CD4-positive, alpha-beta memory T cell (primary cell): ENCODE measurements at regions of chr6 and their contacts with region 1.

Region 1: GRCh38 chr6:27188885-27189418 is 58.5 kb upstream of the PRSS16 start:
- DNase-seq: peak; percentile 55 to 69 (median 67)
- H3K4me3 ChIP-seq: peak overlapping the region; percentile 58 to 73
- H3K4me3 Mint-ChIP-seq: peak overlapping the region; percentile 79 to 96 (median 93)
- H3K27ac ChIP-seq: peak overlapping the region; percentile 44
- H3K27ac Mint-ChIP-seq: peak overlapping the region; percentile 49 to 86 (median 73)
- H3K4me1 ChIP-seq: peaks cover 9% of the 10 kb centered on the region
- H3K4me1 Mint-ChIP-seq: peaks cover 2 to 20% (median 15%) of the 10 kb centered on the region in 4 donors
- H3K27me3 ChIP-seq: no peaks in the 10 kb centered on the region
- H3K27me3 Mint-ChIP-seq: no peaks in the 10 kb centered on the region

Region 2: DNA sequence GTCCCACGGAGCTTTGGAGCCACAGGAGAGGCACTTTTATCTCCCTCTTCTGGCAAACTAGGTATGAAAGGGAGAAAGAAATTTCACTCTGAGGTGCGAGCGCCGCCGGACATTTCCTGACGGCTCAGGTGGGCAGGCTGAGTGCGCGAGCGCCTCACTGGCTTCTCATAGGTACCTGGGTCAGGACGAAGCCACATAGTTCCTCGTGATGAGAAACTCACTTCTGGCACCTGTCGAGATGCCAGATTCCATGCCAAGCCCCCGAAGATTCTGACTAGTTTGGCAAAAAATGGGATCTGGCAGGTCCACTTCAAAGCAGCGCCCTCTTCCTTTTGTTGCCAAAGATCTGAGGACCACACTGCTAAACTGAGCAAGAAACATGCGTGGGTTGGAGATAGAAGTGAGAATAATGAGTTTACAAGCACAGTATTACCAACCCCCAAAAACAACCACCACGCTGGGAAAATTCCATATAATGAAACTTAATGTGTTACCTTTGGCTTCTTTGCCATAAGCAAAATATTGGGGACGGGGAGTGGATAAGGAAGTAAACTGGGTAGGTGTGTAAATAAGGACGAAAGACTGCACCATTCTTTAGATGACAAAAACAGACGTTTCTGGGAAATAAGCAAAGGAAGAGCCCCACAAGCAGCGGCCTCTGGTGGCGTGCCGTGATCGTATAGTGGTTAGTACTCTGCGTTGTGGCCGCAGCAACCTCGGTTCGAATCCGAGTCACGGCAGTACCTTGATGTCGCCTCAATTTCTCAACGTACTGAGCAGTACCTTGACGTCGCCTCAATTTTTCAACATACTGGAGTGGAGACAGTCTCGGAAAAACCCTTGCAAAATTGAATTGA is 31.3 kb before region 1 on chr6:
- CTCF ChIA-PET with region 1: interaction called, 3 read pairs
- POLR2A ChIA-PET with region 1: no interaction called
- intact Hi-C with region 1: loop called (anchors 1 kb)
- DNase-seq: peak; percentile 78 to 92 (median 82)
- H3K4me3 ChIP-seq: peak overlapping the region; percentile 18 to 44
- H3K4me3 Mint-ChIP-seq: peak overlapping the region; percentile 81 to 91 (median 84)
- H3K27ac ChIP-seq: no peak overlapping the region
- H3K27ac Mint-ChIP-seq: peak overlapping the region; percentile 68 to 95 (median 85)
- H3K4me1 ChIP-seq: peaks cover 30% of the 10 kb centered on the region
- H3K4me1 Mint-ChIP-seq: peaks cover 21 to 46% (median 38%) of the 10 kb centered on the region in 4 donors
- H3K27me3 ChIP-seq: no peaks in the 10 kb centered on the region
- H3K27me3 Mint-ChIP-seq: peaks cover 0 to 4% of the 10 kb centered on the region in 2 donors

Region 3: GRCh38 chr6:27608916-27609883 is 420.2 kb after region 1 on chr6:
- CTCF ChIA-PET with region 1: no interaction called
- POLR2A ChIA-PET with region 1: no interaction called
- intact Hi-C with region 1: loop called (anchors 2 kb)
- DNase-seq: peak in 1 of 5 donors; percentile 25
- H3K4me3 ChIP-seq: no peak overlapping the region
- H3K4me3 Mint-ChIP-seq: no peak overlapping the region
- H3K27ac ChIP-seq: no peak overlapping the region
- H3K27ac Mint-ChIP-seq: no peak overlapping the region
- H3K4me1 ChIP-seq: peaks cover 8% of the 10 kb centered on the region
- H3K4me1 Mint-ChIP-seq: peaks cover 7 to 16% (median 11%) of the 10 kb centered on the region in 4 donors
- H3K27me3 ChIP-seq: peaks cover 20% of the 10 kb centered on the region
- H3K27me3 Mint-ChIP-seq: peaks cover 41 to 45% of the 10 kb centered on the region in 2 donors

Region 4: GRCh38 chr6:27795697-27796494 is 606.9 kb after region 1 on chr6:
- CTCF ChIA-PET with region 1: interaction called, 15 read pairs
- POLR2A ChIA-PET with region 1: no interaction called
- intact Hi-C with region 1: loop called (anchors 1 kb)
- DNase-seq: peak; percentile 75 to 82 (median 80)
- H3K4me3 ChIP-seq: no peak overlapping the region
- H3K4me3 Mint-ChIP-seq: peak overlapping the region in 1 of 8 donors; percentile 16
- H3K27ac ChIP-seq: no peak overlapping the region
- H3K27ac Mint-ChIP-seq: peak overlapping the region in 5 of 7 donors; percentile 6 to 91 (median 35)
- H3K4me1 ChIP-seq: peaks cover 21% of the 10 kb centered on the region
- H3K4me1 Mint-ChIP-seq: peaks cover 17 to 29% (median 21%) of the 10 kb centered on the region in 4 donors
- H3K27me3 ChIP-seq: peaks cover 6% of the 10 kb centered on the region
- H3K27me3 Mint-ChIP-seq: peaks cover 6 to 13% of the 10 kb centered on the region in 2 donors

Region 5: GRCh38 chr6:28347119-28347518 is 1158.2 kb after region 1 on chr6:
- CTCF ChIA-PET with region 1: no interaction called
- POLR2A ChIA-PET with region 1: no interaction called
- intact Hi-C with region 1: no loop called
- DNase-seq: no peak
- H3K4me3 ChIP-seq: no peak overlapping the region
- H3K4me3 Mint-ChIP-seq: no peak overlapping the region
- H3K27ac ChIP-seq: no peak overlapping the region
- H3K27ac Mint-ChIP-seq: no peak overlapping the region
- H3K4me1 ChIP-seq: peaks cover 20% of the 10 kb centered on the region
- H3K4me1 Mint-ChIP-seq: peaks cover 16 to 28% (median 23%) of the 10 kb centered on the region in 4 donors
- H3K27me3 ChIP-seq: no peaks in the 10 kb centered on the region
- H3K27me3 Mint-ChIP-seq: peaks cover 16 to 26% of the 10 kb centered on the region in 2 donors